GM18951 (cell line): ENCODE measurements at regions of chrX and their contacts with region 1.

Region 1: GRCh38 chrX:45515262-45516215 is 314.9 kb upstream of the DIPK2B start:
- POLR2A ChIP-seq: no peak

Region 2: GRCh38 chrX:45849253-45849862 is 333.8 kb after region 1 on chrX:
- in situ Hi-C with region 1: loop called (anchors 25 kb)
- POLR2A ChIP-seq: no peak

Region 3: GRCh38 chrX:46251755-46252154 is 736.2 kb after region 1 on chrX:
- in situ Hi-C with region 1: no loop called
- POLR2A ChIP-seq: no peak

Region 4: GRCh38 chrX:46408553-46409407 is 893.2 kb after region 1 on chrX:
- in situ Hi-C with region 1: loop called (anchors 25 kb)
- POLR2A ChIP-seq: no peak